CD4-positive, alpha-beta memory T cell (primary cell): ENCODE measurements at regions of chr16 and their contacts with region 1.

Region 1: DNA sequence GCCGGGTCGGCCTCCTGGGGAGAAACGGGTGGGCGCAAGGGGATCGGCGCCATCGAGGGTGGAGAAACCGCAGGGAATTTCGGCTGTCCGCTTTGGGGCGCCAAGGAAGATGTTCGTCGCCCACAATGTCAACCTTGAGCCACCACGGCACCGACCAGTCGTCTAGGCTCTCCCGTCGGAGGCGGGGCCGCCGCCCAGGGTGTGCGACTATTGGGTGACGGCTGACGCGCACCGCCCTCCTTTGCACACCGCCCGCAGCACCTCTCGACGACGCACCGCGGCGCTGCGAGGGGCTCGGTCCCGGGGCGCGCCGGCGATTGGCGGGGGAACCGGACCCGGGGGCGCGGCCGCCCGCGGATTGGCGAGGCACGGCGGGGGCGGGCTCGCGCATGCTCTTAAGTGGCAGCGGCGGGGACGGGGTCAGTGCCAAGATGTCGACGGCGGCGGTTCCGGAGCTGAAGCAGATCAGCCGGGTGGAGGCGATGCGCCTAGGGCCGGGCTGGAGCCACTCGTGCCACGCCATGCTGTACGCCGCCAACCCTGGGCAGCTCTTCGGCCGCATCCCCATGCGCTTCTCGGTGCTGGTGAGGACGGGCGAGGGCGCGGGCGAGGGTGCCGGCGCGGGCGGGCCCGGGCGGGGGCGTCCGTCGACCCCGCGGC is at the start of gene NUDT16L1:
- DNase-seq: peak; percentile 94 to 99 (median 98)
- H3K4me3 ChIP-seq: peak within 1 kb of the TSS; percentile 61 to 81
- H3K4me3 Mint-ChIP-seq: peak within 1 kb of the TSS; percentile 85 to 92 (median 88)
- H3K27ac ChIP-seq: peak within 1 kb of the TSS; percentile 81
- H3K27ac Mint-ChIP-seq: peak within 1 kb of the TSS; percentile 84 to 93 (median 91)
- H3K4me1 ChIP-seq: peaks cover 21% of the 10 kb centered on the region
- H3K4me1 Mint-ChIP-seq: peaks cover 2 to 22% (median 9%) of the 10 kb centered on the region in 4 donors
- H3K27me3 ChIP-seq: no peaks in the 10 kb centered on the region
- H3K27me3 Mint-ChIP-seq: no peaks in the 10 kb centered on the region
- total RNA-seq, gene NUDT16L1: 52.4 to 53.7 TPM

Region 2: GRCh38 chr16:4660454-4661007 is 32.9 kb before region 1 on chr16:
- CTCF ChIA-PET with region 1: no interaction called
- POLR2A ChIA-PET with region 1: interaction called, 11 read pairs
- intact Hi-C with region 1: loop called (anchors 1 kb)
- DNase-seq: peak; percentile 42 to 79 (median 63)
- H3K4me3 ChIP-seq: no peak overlapping the region
- H3K4me3 Mint-ChIP-seq: peak overlapping the region in 5 of 8 donors; percentile 36 to 69 (median 43)
- H3K27ac ChIP-seq: peak overlapping the region; percentile 49
- H3K27ac Mint-ChIP-seq: peak overlapping the region; percentile 81 to 94 (median 90)
- H3K4me1 ChIP-seq: peaks cover 48% of the 10 kb centered on the region
- H3K4me1 Mint-ChIP-seq: peaks cover 16 to 63% (median 35%) of the 10 kb centered on the region in 4 donors
- H3K27me3 ChIP-seq: no peaks in the 10 kb centered on the region
- H3K27me3 Mint-ChIP-seq: no peaks in the 10 kb centered on the region

Region 3: GRCh38 chr16:4675864-4676786 is 17.3 kb before region 1 on chr16:
- CTCF ChIA-PET with region 1: no interaction called
- POLR2A ChIA-PET with region 1: interaction called, 33 read pairs
- intact Hi-C with region 1: loop called (anchors 2 kb)
- DNase-seq: peak; percentile 72 to 83 (median 80)
- H3K4me3 ChIP-seq: no peak overlapping the region
- H3K4me3 Mint-ChIP-seq: peak overlapping the region; percentile 54 to 87 (median 76)
- H3K27ac ChIP-seq: peak overlapping the region; percentile 65
- H3K27ac Mint-ChIP-seq: peak overlapping the region; percentile 95 to 99 (median 98)
- H3K4me1 ChIP-seq: peaks cover 23% of the 10 kb centered on the region
- H3K4me1 Mint-ChIP-seq: peaks cover 15 to 29% (median 23%) of the 10 kb centered on the region in 4 donors
- H3K27me3 ChIP-seq: no peaks in the 10 kb centered on the region
- H3K27me3 Mint-ChIP-seq: no peaks in the 10 kb centered on the region

Region 4: DNA sequence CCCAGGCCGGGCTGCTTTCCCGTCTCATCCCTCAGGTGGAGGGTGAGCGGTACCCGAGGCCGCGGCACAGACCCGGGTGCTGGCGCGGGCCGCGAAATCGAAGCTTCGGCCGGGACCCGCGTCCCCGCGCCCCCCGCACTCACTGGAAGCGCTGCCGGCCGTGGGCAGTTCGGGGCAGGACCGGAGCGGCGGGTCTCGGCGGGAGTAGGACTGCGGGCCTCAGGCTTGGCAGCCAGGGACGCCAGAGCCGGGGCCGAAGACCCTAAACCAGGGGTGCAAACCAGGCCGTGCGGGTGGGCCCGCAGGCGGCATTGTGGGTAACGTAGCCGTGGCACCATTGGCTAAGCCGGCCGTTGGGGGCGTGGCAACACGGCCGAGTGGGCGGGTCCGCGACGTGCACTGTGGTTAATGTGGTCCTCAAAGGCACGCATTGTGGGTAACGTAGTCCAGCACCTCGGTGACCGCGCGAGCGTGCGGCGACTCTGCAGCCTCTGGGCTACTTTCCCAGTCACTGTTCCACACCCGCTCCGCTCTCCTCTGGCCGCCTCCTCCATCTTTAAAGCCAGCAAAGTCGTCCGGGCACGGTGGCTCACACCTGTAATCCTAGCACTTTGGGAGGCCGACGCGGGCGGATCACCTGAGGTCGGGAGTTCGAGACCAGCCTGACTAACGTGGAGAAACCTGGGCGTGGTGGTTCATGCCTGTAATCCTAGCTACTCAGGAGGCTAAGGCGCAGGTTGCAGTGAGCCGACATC is 73.6 kb after region 1 on chr16 and contains the start of gene ZNF500:
- CTCF ChIA-PET with region 1: no interaction called
- POLR2A ChIA-PET with region 1: interaction called, 27 read pairs
- intact Hi-C with region 1: no loop called
- DNase-seq: peak; percentile 90 to 93 (median 93)
- H3K4me3 ChIP-seq: peak within 1 kb of the TSS; percentile 94 to 96
- H3K4me3 Mint-ChIP-seq: peak within 1 kb of the TSS; percentile 92 to 95 (median 94)
- H3K27ac ChIP-seq: peak within 1 kb of the TSS; percentile 79
- H3K27ac Mint-ChIP-seq: peak within 1 kb of the TSS; percentile 89 to 98 (median 94)
- H3K4me1 ChIP-seq: peaks cover 32% of the 10 kb centered on the region
- H3K4me1 Mint-ChIP-seq: peaks cover 16 to 50% (median 35%) of the 10 kb centered on the region in 4 donors
- H3K27me3 ChIP-seq: no peaks in the 10 kb centered on the region
- H3K27me3 Mint-ChIP-seq: no peaks in the 10 kb centered on the region
- total RNA-seq, gene ZNF500: 33.9 to 35.6 TPM

Region 5: DNA sequence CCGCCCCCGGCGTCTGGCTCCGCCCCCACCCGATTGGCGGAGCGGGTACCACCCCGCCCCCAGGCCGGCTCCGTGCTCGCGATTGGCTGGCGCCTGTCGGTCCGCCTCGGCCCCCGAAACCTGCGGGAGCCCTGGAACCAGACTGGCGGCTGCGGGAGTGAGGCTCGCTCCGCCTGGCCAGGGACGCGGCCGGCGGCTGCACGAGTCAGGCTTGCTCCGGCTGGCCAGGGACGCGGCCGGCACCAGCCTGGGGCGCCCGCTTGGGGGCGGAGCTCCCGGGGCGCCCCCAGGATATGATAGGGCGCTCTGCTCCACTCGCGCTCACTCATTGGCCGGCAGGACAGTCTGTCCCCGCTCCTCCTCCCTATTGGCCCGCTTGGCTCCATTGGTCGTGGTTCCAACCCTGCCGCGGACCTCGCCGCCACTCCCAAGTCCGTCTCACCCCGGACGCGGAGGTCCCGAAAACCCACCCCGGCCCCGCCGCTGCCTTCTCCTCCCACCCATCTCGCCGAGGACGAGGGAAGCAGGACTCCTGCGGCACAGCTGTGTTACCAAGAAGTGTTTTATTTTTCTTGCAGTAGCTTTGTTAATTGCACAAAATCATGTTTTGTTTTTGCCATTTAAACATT is 109.3 kb after region 1 on chr16:
- CTCF ChIA-PET with region 1: no interaction called
- POLR2A ChIA-PET with region 1: interaction called, 18 read pairs
- intact Hi-C with region 1: no loop called
- DNase-seq: peak; percentile 88 to 97 (median 92)
- H3K4me3 ChIP-seq: peak overlapping the region; percentile 52 to 58
- H3K4me3 Mint-ChIP-seq: peak overlapping the region; percentile 82 to 90 (median 85)
- H3K27ac ChIP-seq: peak overlapping the region; percentile 72
- H3K27ac Mint-ChIP-seq: peak overlapping the region; percentile 66 to 97 (median 82)
- H3K4me1 ChIP-seq: peaks cover 18% of the 10 kb centered on the region
- H3K4me1 Mint-ChIP-seq: peaks cover 1 to 25% (median 11%) of the 10 kb centered on the region in 4 donors
- H3K27me3 ChIP-seq: no peaks in the 10 kb centered on the region
- H3K27me3 Mint-ChIP-seq: no peaks in the 10 kb centered on the region

Region 6: DNA sequence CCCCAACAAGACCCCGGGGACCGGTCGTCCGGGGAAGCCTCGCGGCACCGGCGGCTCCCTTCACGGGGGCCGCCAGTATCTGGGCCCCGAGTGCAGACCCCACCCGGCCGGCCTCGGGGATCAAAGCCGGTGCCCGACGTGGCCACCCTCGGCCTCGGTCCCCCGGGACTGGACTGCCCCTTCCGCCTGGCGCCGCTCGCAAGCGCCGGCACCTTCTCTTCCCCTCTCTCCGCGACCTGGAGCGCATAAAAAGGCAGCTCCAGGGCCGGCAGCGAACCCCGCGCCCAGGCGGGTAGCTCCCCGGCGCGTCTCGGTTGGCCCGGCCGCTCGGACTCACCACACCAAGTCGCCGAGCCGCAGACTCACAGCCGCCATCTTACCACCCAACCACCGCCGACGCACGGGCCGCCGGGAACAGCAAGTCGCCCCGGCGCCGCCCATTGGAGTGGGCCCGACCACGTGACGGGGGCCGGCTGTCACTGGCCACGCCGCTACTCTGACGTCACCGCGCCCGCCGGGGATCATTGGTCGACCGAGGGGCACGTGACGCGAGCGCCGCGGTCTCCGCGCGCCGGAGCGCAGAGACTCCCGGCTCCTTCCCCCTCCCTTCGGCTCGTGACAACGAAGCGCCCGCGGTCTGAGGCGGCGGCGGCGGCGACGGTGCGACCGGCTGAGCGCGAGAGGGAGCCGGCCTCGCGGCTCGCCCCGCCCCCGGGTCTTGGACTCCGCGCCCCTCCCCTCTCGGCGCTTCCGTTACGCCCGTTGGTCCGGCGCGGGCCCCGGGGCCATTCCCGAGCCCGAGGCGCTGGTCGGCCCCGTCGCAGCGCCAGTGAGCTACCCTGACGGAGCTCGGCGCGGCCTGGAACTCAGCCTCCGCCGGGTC is 153.7 kb after region 1 on chr16 and contains the starts of genes GLYR1 and UBN1:
- CTCF ChIA-PET with region 1: no interaction called
- POLR2A ChIA-PET with region 1: interaction called, 8 read pairs
- intact Hi-C with region 1: loop called (anchors 1 kb)
- DNase-seq: peak; percentile 99
- H3K4me3 ChIP-seq: peak within 1 kb of the TSS; percentile 74 to 78
- H3K4me3 Mint-ChIP-seq: peak within 1 kb of the TSS; percentile 89 to 93 (median 92)
- H3K27ac ChIP-seq: peak within 1 kb of the TSS; percentile 95
- H3K27ac Mint-ChIP-seq: peak within 1 kb of the TSS; percentile 90 to 96 (median 95)
- H3K4me1 ChIP-seq: peaks cover 55% of the 10 kb centered on the region
- H3K4me1 Mint-ChIP-seq: peaks cover 42 to 65% (median 53%) of the 10 kb centered on the region in 4 donors
- H3K27me3 ChIP-seq: no peaks in the 10 kb centered on the region
- H3K27me3 Mint-ChIP-seq: no peaks in the 10 kb centered on the region
- total RNA-seq, gene GLYR1: 117 to 121 TPM
- total RNA-seq, gene UBN1: 40.4 to 42.7 TPM

Region 7: GRCh38 chr16:5010576-5011329 is 317.3 kb after region 1 on chr16:
- CTCF ChIA-PET with region 1: no interaction called
- POLR2A ChIA-PET with region 1: no interaction called
- intact Hi-C with region 1: no loop called
- DNase-seq: no peak
- H3K4me3 ChIP-seq: no peak overlapping the region
- H3K4me3 Mint-ChIP-seq: no peak overlapping the region
- H3K27ac ChIP-seq: no peak overlapping the region
- H3K27ac Mint-ChIP-seq: no peak overlapping the region
- H3K4me1 ChIP-seq: no peaks in the 10 kb centered on the region
- H3K4me1 Mint-ChIP-seq: no peaks in the 10 kb centered on the region
- H3K27me3 ChIP-seq: no peaks in the 10 kb centered on the region
- H3K27me3 Mint-ChIP-seq: peaks cover 7% of the 10 kb centered on the region in 2 donors